Mammary epithelial cell (primary cell): ENCODE measurements at regions of chr11 and their contacts with region 1.

Region 1: GRCh38 chr11:34387653-34388052 is 29.8 kb upstream of the ABTB2 start:
- DNase-seq: no peak
- H3K4me3 ChIP-seq: no peak overlapping the region
- H3K27ac ChIP-seq: no peak overlapping the region
- H3K4me1 ChIP-seq: no peaks in the 10 kb centered on the region
- H3K27me3 ChIP-seq: no peaks in the 10 kb centered on the region
- CTCF ChIP-seq: no peak

Region 2: DNA sequence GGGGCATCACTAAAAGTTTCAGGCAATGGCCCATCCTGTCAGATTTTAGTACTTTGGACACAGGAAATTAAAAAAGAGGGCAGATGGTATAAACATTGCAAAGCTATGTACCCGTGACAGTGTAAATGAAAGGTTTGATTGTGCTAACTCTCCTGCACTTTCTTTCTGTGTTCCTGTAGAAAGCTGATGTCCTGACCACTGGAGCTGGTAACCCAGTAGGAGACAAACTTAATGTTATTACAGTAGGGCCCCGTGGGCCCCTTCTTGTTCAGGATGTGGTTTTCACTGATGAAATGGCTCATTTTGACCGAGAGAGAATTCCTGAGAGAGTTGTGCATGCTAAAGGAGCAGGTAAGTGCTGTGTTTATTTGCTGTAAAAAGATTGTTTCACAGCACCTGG is 61.4 kb after region 1 on chr11:
- CTCF ChIA-PET with region 1: no interaction called
- dilution Hi-C with region 1: loop called (anchors 5 kb)
- in situ Hi-C with region 1: no loop called
- intact Hi-C with region 1: no loop called
- DNase-seq: peak; percentile 60
- H3K4me3 ChIP-seq: no peak overlapping the region
- H3K27ac ChIP-seq: no peak overlapping the region
- H3K4me1 ChIP-seq: peaks cover 8% of the 10 kb centered on the region
- H3K27me3 ChIP-seq: no peaks in the 10 kb centered on the region
- CTCF ChIP-seq: no peak